SK-N-SH (cell line): ENCODE measurements at regions of chr7 and their contacts with region 1.

Region 1: DNA sequence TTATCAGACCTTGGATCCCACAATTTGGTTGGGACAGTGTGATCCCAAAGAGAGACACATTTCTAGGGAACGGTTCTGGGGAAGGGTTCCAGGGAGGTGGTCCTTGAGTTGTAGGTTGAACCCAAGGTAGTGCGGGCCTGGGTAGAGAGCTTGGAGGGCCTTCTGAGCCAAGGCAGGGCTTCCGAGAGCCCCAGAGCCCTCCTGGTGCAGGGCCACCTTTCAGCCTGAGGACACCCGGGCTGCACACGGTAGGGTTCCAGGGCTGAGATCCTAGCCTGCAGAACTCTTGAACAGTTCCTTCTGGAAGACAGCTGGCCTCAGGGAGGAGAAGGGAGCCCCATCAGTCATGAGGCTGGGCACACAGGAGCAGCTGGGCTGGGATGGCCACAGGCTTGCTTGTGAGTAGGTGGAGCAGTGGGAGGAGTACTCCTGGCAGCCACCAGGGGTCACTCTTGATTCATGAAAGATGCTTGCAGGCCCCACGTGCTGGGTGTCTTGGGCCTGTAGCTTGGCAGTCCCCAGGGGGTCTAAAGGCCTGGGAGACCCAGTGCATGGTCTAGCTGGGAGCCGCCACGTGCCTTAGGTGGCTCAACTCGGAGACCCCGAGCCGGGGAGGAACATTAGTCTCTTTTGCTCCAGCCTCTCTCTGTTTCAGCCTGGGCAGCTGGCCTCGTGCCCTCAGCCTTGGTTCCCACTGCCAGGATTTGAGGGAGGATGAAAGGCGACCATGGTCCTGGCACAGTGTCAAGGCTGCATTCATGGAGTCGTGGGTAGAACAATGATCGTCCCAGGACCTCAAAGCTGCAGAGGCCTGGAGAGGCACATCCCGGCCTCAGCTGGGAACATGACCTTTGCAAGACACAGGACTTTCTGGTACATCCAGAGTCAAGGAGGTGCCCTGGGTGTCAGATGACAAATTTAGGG is 381.6 kb downstream of the TYW1 start:
- DNase-seq: peak; percentile 89
- H3K4me3 ChIP-seq: no peak overlapping the region; a peak in 1 of 4 replicates
- H3K27ac ChIP-seq: no peak overlapping the region
- H3K4me1 ChIP-seq: peaks cover 0 to 3% of the 10 kb centered on the region in 2 experiments; a peak in 1 of 4 replicates
- H3K27me3 ChIP-seq: no peaks in the 10 kb centered on the region
- CTCF ChIP-seq: peak; percentile 91
- EP300 ChIP-seq: no peak
- RAD21 ChIP-seq: peak; percentile 98

Region 2: GRCh38 chr7:67364431-67365017 is 13.7 kb before region 1 on chr7:
- CTCF ChIA-PET with region 1: interaction called, 10 read pairs
- POLR2A ChIA-PET with region 1: no interaction called
- DNase-seq: no peak
- H3K4me3 ChIP-seq: no peak overlapping the region
- H3K27ac ChIP-seq: no peak overlapping the region
- H3K4me1 ChIP-seq: no peaks in the 10 kb centered on the region
- H3K27me3 ChIP-seq: no peaks in the 10 kb centered on the region
- CTCF ChIP-seq: no peak
- EP300 ChIP-seq: no peak
- RAD21 ChIP-seq: no peak

Region 3: DNA sequence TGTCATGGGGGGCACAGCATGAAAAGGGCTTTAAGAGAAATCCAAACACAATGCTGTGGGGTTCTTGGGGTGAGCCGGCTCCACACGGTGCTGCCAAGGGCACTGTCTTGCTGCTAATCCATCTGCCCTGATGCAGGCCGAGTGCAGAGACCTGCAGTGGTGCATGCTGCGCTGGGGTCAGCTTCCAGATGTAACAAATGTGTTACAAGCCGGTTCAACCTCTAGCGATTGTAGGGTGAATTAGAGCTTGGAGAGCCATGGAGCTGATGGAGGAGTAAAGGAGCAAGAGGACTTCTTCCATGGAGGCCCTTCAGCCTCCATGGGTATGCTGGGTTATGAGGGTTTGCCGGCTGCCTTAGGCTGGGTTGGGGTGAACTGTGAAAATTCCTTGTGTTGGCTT is 20.7 kb after region 1 on chr7:
- CTCF ChIA-PET with region 1: interaction called, 41 read pairs
- POLR2A ChIA-PET with region 1: no interaction called
- DNase-seq: peak; percentile 68
- H3K4me3 ChIP-seq: no peak overlapping the region
- H3K27ac ChIP-seq: 0 out of 4 replicates have a peak overlapping the region, but pooled peaks of 1 of the 2 experiments have one; percentile 9
- H3K4me1 ChIP-seq: peaks cover 0 to 4% of the 10 kb centered on the region in 2 experiments; a peak in 1 of 4 replicates
- H3K27me3 ChIP-seq: no peaks in the 10 kb centered on the region
- CTCF ChIP-seq: no peak
- EP300 ChIP-seq: no peak
- RAD21 ChIP-seq: no peak

Region 4: GRCh38 chr7:67462781-67463191 is 84.6 kb after region 1 on chr7:
- CTCF ChIA-PET with region 1: interaction called, 23 read pairs
- POLR2A ChIA-PET with region 1: no interaction called
- DNase-seq: peak; percentile 88
- H3K4me3 ChIP-seq: no peak overlapping the region
- H3K27ac ChIP-seq: peak overlapping the region in 1 of 2 experiments; percentile 97; a peak in 2 of 4 replicates
- H3K4me1 ChIP-seq: peaks cover 0 to 21% of the 10 kb centered on the region in 2 experiments; a peak in 2 of 4 replicates
- H3K27me3 ChIP-seq: no peaks in the 10 kb centered on the region
- CTCF ChIP-seq: no peak
- EP300 ChIP-seq: peak in 1 of 2 experiments; percentile 97; a peak in 2 of 4 replicates
- RAD21 ChIP-seq: peak; percentile 43; the same call in 1 of the 2 replicates

Region 5: GRCh38 chr7:67484244-67484751 is 106.1 kb after region 1 on chr7:
- CTCF ChIA-PET with region 1: interaction called, 36 read pairs
- POLR2A ChIA-PET with region 1: no interaction called
- DNase-seq: peak; percentile 77
- H3K4me3 ChIP-seq: peak overlapping the region; percentile 22 to 37; a peak in 3 of 4 replicates
- H3K27ac ChIP-seq: 0 out of 4 replicates have a peak overlapping the region, but pooled peaks of 1 of the 2 experiments have one; percentile 14
- H3K4me1 ChIP-seq: peaks cover 0 to 4% of the 10 kb centered on the region in 2 experiments; a peak in 1 of 4 replicates
- H3K27me3 ChIP-seq: no peaks in the 10 kb centered on the region
- CTCF ChIP-seq: peak; percentile 82
- EP300 ChIP-seq: peak in 1 of 2 experiments; percentile 76; a peak in 2 of 4 replicates
- RAD21 ChIP-seq: peak; percentile 96

Region 6: DNA sequence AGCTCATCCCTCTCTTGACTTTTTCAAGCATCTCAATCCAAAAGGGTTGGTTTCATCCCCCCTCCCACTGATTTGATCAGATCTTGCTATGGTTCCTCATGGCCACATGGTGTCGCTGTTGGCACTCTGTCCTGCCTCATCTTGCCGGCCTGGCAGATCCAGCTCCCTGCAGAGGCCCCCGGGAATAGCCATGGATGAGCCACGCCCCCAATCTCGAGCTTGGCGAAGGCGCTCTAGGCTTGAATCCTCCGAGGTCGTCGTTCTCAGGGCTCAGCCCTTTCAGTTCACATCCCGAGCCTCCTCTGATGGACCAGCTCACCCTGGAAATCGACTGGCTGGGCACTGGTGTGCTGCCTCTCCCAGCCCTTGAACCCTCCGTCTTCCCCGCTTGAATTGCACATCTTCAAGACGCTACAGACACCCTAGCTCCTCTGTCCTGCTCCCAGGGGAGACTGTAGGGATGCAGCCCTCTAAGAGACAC is 247.1 kb after region 1 on chr7:
- CTCF ChIA-PET with region 1: interaction called, 33 read pairs
- POLR2A ChIA-PET with region 1: no interaction called
- DNase-seq: peak; percentile 86
- H3K4me3 ChIP-seq: peak overlapping the region; percentile 21 to 42; a peak in 2 of 4 replicates
- H3K27ac ChIP-seq: no peak overlapping the region
- H3K4me1 ChIP-seq: peaks cover 0 to 11% of the 10 kb centered on the region in 2 experiments; a peak in 1 of 4 replicates
- H3K27me3 ChIP-seq: no peaks in the 10 kb centered on the region
- CTCF ChIP-seq: peak; percentile 81
- EP300 ChIP-seq: 0 out of 4 replicates have a peak, but pooled peaks of 1 of the 2 experiments have one; percentile 11
- RAD21 ChIP-seq: peak; percentile 98